Activated B cell treated with CpG ODN at 0.5 μM for 24 hours (primary cell): ENCODE measurements at regions of chr3 and their contacts with region 1.

Region 1: DNA sequence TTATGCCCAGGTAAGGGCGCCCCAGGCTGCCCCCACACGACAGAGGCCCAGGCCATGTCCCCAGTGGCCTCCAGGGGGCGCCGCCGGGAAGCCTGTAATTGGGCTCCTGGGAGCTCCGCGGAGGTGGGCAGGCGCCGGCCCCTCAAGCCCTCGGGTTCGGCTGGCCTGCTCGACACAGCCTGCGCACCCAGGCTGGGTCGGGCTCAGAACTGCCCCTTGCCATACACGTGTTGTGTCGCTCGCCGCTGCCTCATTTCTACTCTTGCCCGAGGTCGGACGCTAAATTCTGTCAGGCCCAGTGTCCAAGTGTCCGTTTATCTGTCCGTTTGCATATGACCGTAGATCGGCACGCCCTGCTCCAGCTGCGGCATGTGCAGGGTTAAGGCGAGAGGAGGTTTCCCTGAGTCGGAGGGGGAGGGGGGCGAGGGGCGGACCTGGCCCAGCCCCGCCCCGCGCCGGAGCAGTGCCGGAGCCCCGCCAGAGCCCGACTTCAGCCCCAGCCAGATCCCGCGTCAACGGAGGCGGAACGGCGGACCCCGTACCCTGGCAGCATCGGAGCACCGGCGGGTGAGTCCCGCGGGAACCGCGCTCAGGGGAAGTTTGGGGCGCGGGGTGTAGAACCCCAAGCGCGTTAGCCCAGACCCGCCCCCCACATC is at the start of gene KLHDC8B:
- DNase-seq: peak; percentile 76
- ATAC-seq: peak; percentile 81
- H3K4me3 Mint-ChIP-seq: peak within 1 kb of the TSS; percentile 87
- H3K27ac Mint-ChIP-seq: peak within 1 kb of the TSS; percentile 35
- H3K4me1 Mint-ChIP-seq: peaks cover 12% of the 10 kb centered on the region
- H3K27me3 Mint-ChIP-seq: peaks cover 2% of the 10 kb centered on the region
- CTCF ChIP-seq: peak; percentile 79
- total RNA-seq, gene KLHDC8B: 1.1 and 1.2 TPM in 2 replicates

Region 2: GRCh38 chr3:48926425-48927392 is 244.5 kb before region 1 on chr3:
- CTCF ChIA-PET with region 1: no interaction called
- POLR2A ChIA-PET with region 1: no interaction called
- intact Hi-C with region 1: no loop called
- DNase-seq: no peak
- ATAC-seq: no peak
- H3K4me3 Mint-ChIP-seq: no peak overlapping the region
- H3K27ac Mint-ChIP-seq: no peak overlapping the region
- H3K4me1 Mint-ChIP-seq: peaks cover 46% of the 10 kb centered on the region
- H3K27me3 Mint-ChIP-seq: no peaks in the 10 kb centered on the region
- CTCF ChIP-seq: no peak

Region 3: DNA sequence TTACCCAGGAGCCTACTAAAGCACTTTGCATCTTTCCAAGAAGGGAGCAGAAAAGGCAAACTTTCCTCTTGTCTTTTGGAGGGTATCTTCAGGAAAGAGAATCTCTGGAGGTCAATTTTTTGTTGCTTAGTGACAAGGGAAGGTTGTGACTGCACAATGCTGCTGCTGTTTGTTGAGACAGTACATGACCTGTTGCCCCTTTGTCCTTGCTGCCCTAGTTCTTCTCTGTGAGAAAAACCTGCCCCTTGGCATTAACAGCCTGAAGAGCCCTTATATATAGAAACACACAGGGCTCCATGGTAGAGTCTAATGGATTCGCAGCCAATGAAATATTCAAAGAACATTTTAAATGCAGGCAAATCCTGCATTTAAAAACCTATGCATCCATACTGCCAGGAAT is 20.5 kb after region 1 on chr3:
- CTCF ChIA-PET with region 1: no interaction called
- POLR2A ChIA-PET with region 1: no interaction called
- intact Hi-C with region 1: no loop called
- DNase-seq: no peak
- ATAC-seq: no peak
- H3K4me3 Mint-ChIP-seq: no peak overlapping the region
- H3K27ac Mint-ChIP-seq: no peak overlapping the region
- H3K4me1 Mint-ChIP-seq: no peaks in the 10 kb centered on the region
- H3K27me3 Mint-ChIP-seq: peaks cover 12% of the 10 kb centered on the region
- CTCF ChIP-seq: no peak

Region 4: GRCh38 chr3:49276475-49277382 is 105.5 kb after region 1 on chr3 and contains the start of gene C3orf62:
- CTCF ChIA-PET with region 1: interaction called, 3 read pairs
- POLR2A ChIA-PET with region 1: no interaction called
- intact Hi-C with region 1: loop called (anchors 2 kb)
- DNase-seq: peak; percentile 61
- ATAC-seq: peak; percentile 94
- H3K4me3 Mint-ChIP-seq: peak within 1 kb of the TSS; percentile 89
- H3K27ac Mint-ChIP-seq: peak within 1 kb of the TSS; percentile 92
- H3K4me1 Mint-ChIP-seq: peaks cover 20% of the 10 kb centered on the region
- H3K27me3 Mint-ChIP-seq: no peaks in the 10 kb centered on the region
- CTCF ChIP-seq: no peak
- total RNA-seq, gene C3orf62: 5.3 and 6.1 TPM in 2 replicates

Region 5: GRCh38 chr3:49295489-49296058 is 124.3 kb after region 1 on chr3:
- CTCF ChIA-PET with region 1: no interaction called
- POLR2A ChIA-PET with region 1: no interaction called
- intact Hi-C with region 1: loop called (anchors 5 kb)
- DNase-seq: no peak
- ATAC-seq: peak; percentile 65
- H3K4me3 Mint-ChIP-seq: no peak overlapping the region
- H3K27ac Mint-ChIP-seq: no peak overlapping the region
- H3K4me1 Mint-ChIP-seq: no peaks in the 10 kb centered on the region
- H3K27me3 Mint-ChIP-seq: no peaks in the 10 kb centered on the region
- CTCF ChIP-seq: no peak

Region 6: DNA sequence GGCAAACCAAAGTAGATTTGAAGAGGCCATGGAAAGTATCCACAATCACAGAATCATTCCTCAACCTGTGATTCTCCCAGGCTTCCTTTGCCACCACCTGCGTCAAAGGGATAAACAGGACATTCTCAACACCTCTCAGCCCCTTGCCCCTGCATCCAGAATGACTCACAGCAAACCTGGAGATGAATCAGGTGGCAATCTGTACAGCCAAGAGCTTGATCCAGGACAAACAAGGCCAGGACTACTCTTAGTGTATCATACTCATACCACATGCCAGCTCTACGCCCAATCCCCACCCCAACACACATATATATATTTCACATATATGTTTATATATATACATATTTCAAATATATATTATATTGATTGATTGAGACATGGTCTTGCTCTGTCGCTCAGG is 129.3 kb after region 1 on chr3:
- CTCF ChIA-PET with region 1: no interaction called
- POLR2A ChIA-PET with region 1: interaction called, 14 read pairs
- intact Hi-C with region 1: loop called (anchors 5 kb)
- DNase-seq: no peak
- ATAC-seq: no peak
- H3K4me3 Mint-ChIP-seq: no peak overlapping the region
- H3K27ac Mint-ChIP-seq: no peak overlapping the region
- H3K4me1 Mint-ChIP-seq: no peaks in the 10 kb centered on the region
- H3K27me3 Mint-ChIP-seq: no peaks in the 10 kb centered on the region
- CTCF ChIP-seq: no peak